AG04450 (cell line): ENCODE measurements at regions of chr3 and their contacts with region 1.

Region 1: GRCh38 chr3:138118612-138119422 is 3.4 kb upstream of the DZIP1L start:
- DNase-seq: peak; percentile 29
- H3K4me3 ChIP-seq: no peak overlapping the region
- H3K27ac ChIP-seq: no peak overlapping the region
- H3K27me3 ChIP-seq: no peaks in the 10 kb centered on the region
- CTCF ChIP-seq: peak; percentile 88

Region 2: GRCh38 chr3:138068579-138069174 is 50.1 kb before region 1 on chr3:
- CTCF ChIA-PET with region 1: interaction called, 202 read pairs
- POLR2A ChIA-PET with region 1: no interaction called
- DNase-seq: peak; percentile 68
- H3K4me3 ChIP-seq: no peak overlapping the region
- H3K27ac ChIP-seq: no peak overlapping the region
- H3K27me3 ChIP-seq: no peaks in the 10 kb centered on the region
- CTCF ChIP-seq: peak; percentile 99

Region 3: GRCh38 chr3:138089091-138089490 is 29.7 kb before region 1 on chr3:
- CTCF ChIA-PET with region 1: interaction called, 28 read pairs
- POLR2A ChIA-PET with region 1: interaction called, 3 read pairs
- DNase-seq: peak; percentile 13
- H3K4me3 ChIP-seq: no peak overlapping the region
- H3K27ac ChIP-seq: no peak overlapping the region
- H3K27me3 ChIP-seq: no peaks in the 10 kb centered on the region
- CTCF ChIP-seq: no peak

Region 4: GRCh38 chr3:138132239-138132638 is 13.4 kb after region 1 on chr3 and contains the start of gene A4GNT:
- CTCF ChIA-PET with region 1: interaction called, 23 read pairs
- POLR2A ChIA-PET with region 1: no interaction called
- DNase-seq: no peak
- H3K4me3 ChIP-seq: no peak within 1 kb of the TSS
- H3K27ac ChIP-seq: no peak within 1 kb of the TSS
- H3K27me3 ChIP-seq: peaks cover 9% of the 10 kb centered on the region
- CTCF ChIP-seq: no peak
- polyA plus RNA-seq, gene A4GNT: not detected in 2 replicates

Region 5: GRCh38 chr3:138578141-138578540 is 459.3 kb after region 1 on chr3:
- CTCF ChIA-PET with region 1: no interaction called
- POLR2A ChIA-PET with region 1: no interaction called
- DNase-seq: no peak
- H3K4me3 ChIP-seq: no peak overlapping the region
- H3K27ac ChIP-seq: no peak overlapping the region
- H3K27me3 ChIP-seq: no peaks in the 10 kb centered on the region
- CTCF ChIP-seq: no peak